Endothelial cell of umbilical vein (primary cell): ENCODE measurements at regions of chr3 and their contacts with region 1.

Region 1: DNA sequence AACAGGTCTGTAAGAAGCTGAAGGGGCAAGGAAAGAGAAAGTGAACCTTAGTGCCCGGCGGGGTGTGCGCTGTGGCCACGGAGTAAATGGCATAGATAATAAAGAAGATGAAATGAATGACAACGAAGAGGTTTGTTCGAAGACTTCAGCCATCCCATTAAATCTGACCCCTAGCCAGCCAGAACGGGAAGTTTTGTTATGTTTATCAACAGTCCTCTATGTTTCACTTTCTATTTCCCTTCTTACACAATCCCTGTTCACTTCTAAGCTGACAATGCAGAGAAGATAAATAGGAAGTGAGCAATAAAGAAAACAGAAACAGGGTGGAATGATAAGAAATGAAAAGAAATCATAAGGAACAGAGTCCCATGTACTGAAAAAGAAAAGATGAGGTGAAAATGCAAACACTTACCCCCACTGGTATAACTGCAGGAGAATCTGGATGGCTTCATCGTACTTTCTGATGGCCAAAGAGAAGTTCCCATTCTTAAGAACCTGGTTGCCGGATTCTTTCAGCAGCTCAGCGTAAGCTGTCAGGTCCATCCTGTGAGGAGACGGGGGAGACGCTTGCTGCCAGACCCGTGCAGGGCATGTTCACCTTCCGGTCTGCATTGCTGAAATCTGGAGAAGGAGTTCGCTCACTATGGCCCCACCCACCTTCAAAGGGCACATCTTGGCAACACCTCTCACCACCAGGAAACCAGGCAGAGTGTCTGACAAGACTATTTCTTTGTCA is 36.8 kb downstream of the TRANK1 start:
- DNase-seq: peak; percentile 90
- H3K4me3 ChIP-seq: peak overlapping the region; percentile 12 to 88 (median 65)
- H3K27ac ChIP-seq: peak overlapping the region; percentile 80
- H3K4me1 ChIP-seq: peaks cover 25% of the 10 kb centered on the region
- H3K27me3 ChIP-seq: no peaks in the 10 kb centered on the region
- CTCF ChIP-seq: no peak
- POLR2A ChIP-seq: peak; percentile 10

Region 2: GRCh38 chr3:36893137-36893557 is 14.9 kb before region 1 on chr3:
- CTCF ChIA-PET with region 1: no interaction called
- POLR2A ChIA-PET with region 1: no interaction called
- dilution Hi-C with region 1: no loop called
- intact Hi-C with region 1: loop called (anchors 1 kb)
- DNase-seq: peak; percentile 62
- H3K4me3 ChIP-seq: no peak overlapping the region
- H3K27ac ChIP-seq: peak overlapping the region; percentile 31
- H3K4me1 ChIP-seq: peaks cover 9% of the 10 kb centered on the region
- H3K27me3 ChIP-seq: no peaks in the 10 kb centered on the region
- CTCF ChIP-seq: no peak
- POLR2A ChIP-seq: no peak

Region 3: DNA sequence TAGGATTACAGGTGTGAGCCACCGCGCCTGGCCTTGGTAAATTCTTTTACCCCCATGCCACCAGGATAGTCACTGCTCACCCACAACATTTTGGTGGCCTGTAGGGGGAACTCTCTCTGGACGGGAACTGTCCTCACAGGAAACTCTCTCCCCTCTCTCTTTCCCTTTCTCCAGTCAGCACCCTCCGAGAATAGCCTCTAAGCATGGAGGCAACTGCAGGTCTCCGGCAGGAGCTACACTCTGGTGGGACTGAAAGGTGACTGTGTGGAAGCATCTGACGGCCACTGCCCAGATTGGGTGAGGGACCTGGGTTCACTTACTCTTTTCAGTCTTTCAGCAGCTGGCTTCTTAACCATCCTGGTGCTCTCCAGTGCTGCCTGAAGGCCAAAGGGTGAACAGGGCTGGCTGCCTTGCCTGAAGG is 15.5 kb after region 1 on chr3:
- CTCF ChIA-PET with region 1: interaction called, 11 read pairs
- POLR2A ChIA-PET with region 1: no interaction called
- dilution Hi-C with region 1: no loop called
- intact Hi-C with region 1: no loop called
- DNase-seq: no peak
- H3K4me3 ChIP-seq: no peak overlapping the region
- H3K27ac ChIP-seq: no peak overlapping the region
- H3K4me1 ChIP-seq: no peaks in the 10 kb centered on the region
- H3K27me3 ChIP-seq: no peaks in the 10 kb centered on the region
- CTCF ChIP-seq: peak in 1 of 2 donors; percentile 3
- POLR2A ChIP-seq: no peak

Region 4: DNA sequence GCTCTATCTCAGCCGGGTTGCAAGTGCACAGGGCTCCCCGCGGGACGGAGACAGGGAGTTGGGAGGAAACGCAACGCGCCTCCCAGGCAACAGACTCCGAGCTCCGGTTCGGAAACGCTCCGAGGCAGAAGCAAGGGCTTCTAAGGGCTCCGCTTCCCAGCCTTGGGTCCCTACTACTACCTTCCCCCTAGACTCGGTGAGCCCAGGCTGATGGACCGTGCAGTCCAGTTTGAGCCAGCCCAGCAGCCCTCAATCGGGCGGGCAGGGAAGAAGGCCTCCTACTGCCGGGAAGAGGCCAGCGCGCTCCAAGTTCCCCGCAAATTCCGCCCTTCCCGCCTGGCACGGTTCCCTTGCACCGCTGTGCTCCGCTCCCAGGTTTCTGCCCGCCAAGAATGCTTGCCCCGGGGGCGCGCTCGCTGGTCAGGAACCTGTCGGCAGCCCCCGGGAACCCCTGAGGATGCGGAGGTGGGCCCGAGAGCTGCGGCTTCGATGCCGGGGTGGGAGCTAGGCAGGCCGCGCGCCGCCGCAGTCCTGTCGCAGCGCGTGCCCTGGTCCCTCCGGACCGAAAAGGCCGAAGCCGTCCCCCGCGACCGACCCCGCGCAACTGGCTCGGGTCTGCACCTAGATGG is 36.0 kb after region 1 on chr3:
- CTCF ChIA-PET with region 1: interaction called, 7 read pairs
- POLR2A ChIA-PET with region 1: no interaction called
- dilution Hi-C with region 1: no loop called
- intact Hi-C with region 1: loop called (anchors 2 kb)
- DNase-seq: peak; percentile 61
- H3K4me3 ChIP-seq: peak overlapping the region; percentile 56 to 85 (median 69)
- H3K27ac ChIP-seq: no peak overlapping the region
- H3K4me1 ChIP-seq: peaks cover 12% of the 10 kb centered on the region
- H3K27me3 ChIP-seq: no peaks in the 10 kb centered on the region
- CTCF ChIP-seq: no peak
- POLR2A ChIP-seq: no peak

Region 5: DNA sequence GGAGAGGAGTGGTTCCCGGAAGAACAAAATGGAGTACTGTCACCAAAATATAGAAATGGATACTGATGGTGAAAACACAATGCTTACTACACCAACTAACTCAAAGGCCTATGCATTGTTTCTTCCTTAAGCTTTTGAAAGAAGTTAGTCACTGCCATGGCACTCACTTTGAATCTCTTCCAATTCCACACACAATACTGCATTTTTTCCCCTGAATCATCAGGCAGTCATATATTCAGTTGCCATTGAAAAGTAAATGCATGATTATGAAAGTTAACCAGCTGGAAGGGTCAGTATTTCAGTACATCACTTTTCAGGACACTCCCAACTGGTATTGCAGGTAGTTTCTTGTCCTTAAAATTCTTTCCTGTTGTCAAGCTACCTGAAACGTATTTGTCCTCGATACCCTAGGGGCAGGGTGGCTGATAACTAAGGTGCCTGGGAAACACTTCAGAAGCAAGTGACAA is 275.3 kb after region 1 on chr3:
- CTCF ChIA-PET with region 1: no interaction called
- POLR2A ChIA-PET with region 1: no interaction called
- dilution Hi-C with region 1: no loop called
- intact Hi-C with region 1: loop called (anchors 5 kb)
- DNase-seq: peak; percentile 93
- H3K4me3 ChIP-seq: no peak overlapping the region
- H3K27ac ChIP-seq: peak overlapping the region; percentile 71
- H3K4me1 ChIP-seq: peaks cover 21% of the 10 kb centered on the region
- H3K27me3 ChIP-seq: no peaks in the 10 kb centered on the region
- CTCF ChIP-seq: no peak
- POLR2A ChIP-seq: no peak